ENCODE measurements at regions of chr5 and their contacts with region 1.

Region 1: GRCh38 chr5:176415952-176416924 is at the start of gene CLTB:
- DNase-seq: peak; percentile 94
- H3K4me3 Mint-ChIP-seq: peak within 1 kb of the TSS; percentile 86
- H3K27ac Mint-ChIP-seq: peak within 1 kb of the TSS; percentile 78
- H3K4me1 Mint-ChIP-seq: peaks cover 30% of the 10 kb centered on the region
- H3K27me3 Mint-ChIP-seq: peaks cover 8% of the 10 kb centered on the region
- total RNA-seq, gene CLTB: 71.5 and 76.2 TPM in 2 replicates

Region 2: DNA sequence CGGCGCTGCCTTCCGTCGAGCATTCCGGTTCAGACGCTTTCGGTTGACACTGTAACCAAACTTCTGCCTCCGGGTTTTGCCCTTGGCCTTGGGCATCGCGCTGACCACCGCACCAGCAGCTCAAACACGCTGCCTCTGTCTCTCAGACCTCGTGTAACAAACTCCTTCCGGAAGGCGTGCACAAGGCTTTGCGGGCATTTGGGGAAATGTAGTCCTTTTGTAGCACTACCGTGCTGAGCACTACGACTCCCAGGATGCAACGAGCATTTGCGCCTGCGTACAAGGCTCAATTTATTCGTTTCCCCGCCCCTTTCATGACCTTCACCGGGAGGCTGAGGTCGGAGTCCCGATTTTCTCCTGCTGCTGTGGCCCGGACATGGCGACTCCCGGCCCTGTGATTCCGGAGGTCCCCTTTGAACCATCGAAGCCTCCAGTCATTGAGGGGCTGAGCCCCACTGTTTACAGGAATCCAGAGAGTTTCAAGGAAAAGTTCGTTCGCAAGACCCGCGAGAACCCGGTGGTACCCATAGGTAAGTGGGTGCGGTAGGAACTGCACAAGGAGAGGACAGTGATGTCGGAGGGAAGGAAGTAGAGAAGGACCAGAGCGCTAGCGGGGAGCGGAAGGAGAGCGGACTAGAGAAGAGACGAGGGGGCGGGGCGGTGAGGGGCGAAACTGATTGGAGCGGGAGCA is 27.6 kb before region 1 on chr5 and contains the starts of genes HIGD2A and NOP16:
- intact Hi-C with region 1: loop called (anchors 1 kb)
- DNase-seq: peak; percentile 99
- H3K4me3 Mint-ChIP-seq: peak within 1 kb of the TSS; percentile 98
- H3K27ac Mint-ChIP-seq: peak within 1 kb of the TSS; percentile 100
- H3K4me1 Mint-ChIP-seq: peaks cover 25% of the 10 kb centered on the region
- H3K27me3 Mint-ChIP-seq: no peaks in the 10 kb centered on the region
- total RNA-seq, gene HIGD2A: 96.4 and 104 TPM in 2 replicates
- total RNA-seq, gene NOP16: 109 and 114 TPM in 2 replicates

Region 3: GRCh38 chr5:176447982-176448608 is 31.9 kb after region 1 on chr5 and contains the start of gene FAF2:
- intact Hi-C with region 1: loop called (anchors 1 kb)
- DNase-seq: peak; percentile 100
- H3K4me3 Mint-ChIP-seq: peak within 1 kb of the TSS; percentile 93
- H3K27ac Mint-ChIP-seq: peak within 1 kb of the TSS; percentile 94
- H3K4me1 Mint-ChIP-seq: peaks cover 30% of the 10 kb centered on the region
- H3K27me3 Mint-ChIP-seq: peaks cover 2% of the 10 kb centered on the region
- total RNA-seq, gene FAF2: 42.8 and 43.9 TPM in 2 replicates

Region 4: DNA sequence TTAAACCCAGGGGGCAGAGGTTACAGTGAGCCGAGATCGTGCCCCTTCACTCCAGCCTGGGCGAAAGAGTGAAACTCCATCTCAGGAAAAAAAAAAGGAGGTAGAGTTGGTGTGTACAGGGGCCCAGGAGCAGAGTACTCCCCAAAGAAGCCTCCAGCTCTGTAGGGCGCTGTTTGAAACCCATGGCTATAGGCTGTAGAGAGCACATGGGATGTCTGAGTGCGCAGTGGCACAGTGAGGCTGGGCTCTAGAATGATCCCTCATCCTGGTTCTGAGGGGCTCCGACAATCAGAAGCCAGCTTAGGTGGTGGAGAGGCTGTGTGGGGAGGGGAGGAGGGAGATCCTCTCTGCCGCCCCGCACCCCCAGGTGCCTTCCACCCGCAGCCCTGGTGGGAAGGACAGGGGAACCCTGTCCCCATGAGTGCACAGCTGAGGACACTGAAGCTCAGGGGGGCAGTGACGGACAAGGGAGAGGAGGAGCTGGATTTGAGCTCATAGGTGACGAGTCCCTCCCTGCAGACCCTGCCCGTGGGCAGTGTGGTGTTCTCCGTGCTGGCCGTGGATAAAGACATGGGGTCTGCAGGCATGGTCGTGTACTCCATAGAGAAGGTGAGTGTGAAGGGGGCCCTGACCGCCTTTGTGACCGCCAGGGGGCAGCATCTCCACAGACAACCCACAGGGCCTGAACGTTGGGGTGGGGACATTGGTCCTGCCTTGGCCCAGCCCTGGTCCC is 157.5 kb after region 1 on chr5:
- intact Hi-C with region 1: loop called (anchors 1 kb)
- DNase-seq: peak; percentile 93
- H3K4me3 Mint-ChIP-seq: no peak overlapping the region
- H3K27ac Mint-ChIP-seq: no peak overlapping the region
- H3K4me1 Mint-ChIP-seq: peaks cover 6% of the 10 kb centered on the region
- H3K27me3 Mint-ChIP-seq: peaks cover 9% of the 10 kb centered on the region

Region 5: GRCh38 chr5:176619203-176619568 is 202.9 kb after region 1 on chr5:
- intact Hi-C with region 1: loop called (anchors 5 kb)
- DNase-seq: peak; percentile 94
- H3K4me3 Mint-ChIP-seq: peak overlapping the region; percentile 43
- H3K27ac Mint-ChIP-seq: no peak overlapping the region
- H3K4me1 Mint-ChIP-seq: peaks cover 9% of the 10 kb centered on the region
- H3K27me3 Mint-ChIP-seq: peaks cover 76% of the 10 kb centered on the region

Region 6: GRCh38 chr5:176744584-176744965 is 328.3 kb after region 1 on chr5:
- intact Hi-C with region 1: no loop called
- DNase-seq: no peak
- H3K4me3 Mint-ChIP-seq: no peak overlapping the region
- H3K27ac Mint-ChIP-seq: no peak overlapping the region
- H3K4me1 Mint-ChIP-seq: peaks cover 10% of the 10 kb centered on the region
- H3K27me3 Mint-ChIP-seq: peaks cover 59% of the 10 kb centered on the region